Naive thymus-derived CD4-positive, alpha-beta T cell (primary cell): ENCODE measurements at regions of chr4 and their contacts with region 1.

Region 1: DNA sequence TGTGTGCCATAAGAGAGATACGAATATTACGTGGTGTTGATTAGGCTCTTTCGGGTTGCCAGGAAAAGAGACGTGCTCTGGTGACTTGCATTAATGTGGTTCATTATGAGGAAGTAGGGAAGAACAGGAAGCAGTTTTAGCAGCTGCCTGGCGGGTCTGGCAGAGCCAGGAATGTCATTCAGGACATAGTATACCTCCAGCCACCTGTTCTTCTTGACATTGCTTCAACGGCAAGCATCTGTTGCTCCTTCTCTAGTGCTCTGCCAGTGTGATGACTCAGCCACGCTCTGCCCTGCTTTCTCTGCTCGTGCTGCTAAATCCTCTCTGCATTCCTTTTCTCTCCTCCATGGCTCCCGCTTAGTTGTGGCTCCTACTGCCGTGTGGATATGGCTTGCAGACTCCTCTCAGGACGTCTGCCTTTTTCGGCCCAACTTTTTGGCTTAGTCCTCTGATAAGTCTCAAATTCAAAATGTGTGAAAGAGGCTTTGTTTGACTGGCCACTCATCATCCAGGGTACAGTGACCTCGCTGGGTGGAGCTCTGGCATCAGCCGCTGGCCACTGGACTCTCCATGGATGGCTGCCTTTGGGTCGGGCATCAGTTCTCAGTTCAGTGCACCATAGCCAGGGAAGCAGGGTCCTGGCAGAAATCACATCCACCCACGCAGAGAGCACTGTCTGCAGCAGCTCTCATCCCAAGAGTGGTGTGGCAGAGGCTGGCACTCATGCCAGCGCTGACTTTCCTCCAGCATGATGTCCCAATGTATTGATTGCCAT is 89.3 kb upstream of the KLF3 start:
- DNase-seq: no peak
- ATAC-seq: peak; percentile 52
- H3K4me3 ChIP-seq: no peak overlapping the region
- H3K4me3 Mint-ChIP-seq: no peak overlapping the region
- H3K27ac ChIP-seq: no peak overlapping the region
- H3K27ac Mint-ChIP-seq: peak overlapping the region in 1 of 9 donors; percentile 29
- H3K4me1 ChIP-seq: no peaks in the 10 kb centered on the region
- H3K4me1 Mint-ChIP-seq: peaks cover 0 to 17% (median 12%) of the 10 kb centered on the region in 7 donors
- H3K27me3 ChIP-seq: no peaks in the 10 kb centered on the region
- H3K27me3 Mint-ChIP-seq: peaks cover 0 to 16% (median 0%) of the 10 kb centered on the region in 5 donors

Region 2: GRCh38 chr4:38534344-38535045 is 40.3 kb before region 1 on chr4:
- CTCF ChIA-PET with region 1: no interaction called
- POLR2A ChIA-PET with region 1: no interaction called
- intact Hi-C with region 1: loop called in 1 of 2 experiments (anchors 5 kb)
- DNase-seq: no peak
- ATAC-seq: no peak
- H3K4me3 ChIP-seq: no peak overlapping the region
- H3K4me3 Mint-ChIP-seq: no peak overlapping the region
- H3K27ac ChIP-seq: no peak overlapping the region
- H3K27ac Mint-ChIP-seq: peak overlapping the region in 1 of 9 donors; percentile 51
- H3K4me1 ChIP-seq: peaks cover 8 to 14% of the 10 kb centered on the region in 2 donors
- H3K4me1 Mint-ChIP-seq: peaks cover 4 to 27% (median 20%) of the 10 kb centered on the region in 7 donors
- H3K27me3 ChIP-seq: no peaks in the 10 kb centered on the region
- H3K27me3 Mint-ChIP-seq: peaks cover 0 to 38% (median 0%) of the 10 kb centered on the region in 5 donors